B cell (primary cell): ENCODE measurements at regions of chr1 and their contacts with region 1.

Region 1: GRCh38 chr1:222814536-222815439 is at the start of gene DISP1:
- DNase-seq: peak; percentile 80
- ATAC-seq: peak; percentile 86
- H3K4me3 ChIP-seq: peak within 1 kb of the TSS; percentile 84 to 99 (median 94)
- H3K4me3 Mint-ChIP-seq: peak within 1 kb of the TSS; percentile 94
- H3K27ac ChIP-seq: peak within 1 kb of the TSS; percentile 81 to 90
- H3K27ac Mint-ChIP-seq: peak within 1 kb of the TSS; percentile 95
- H3K4me1 ChIP-seq: peaks cover 17 to 23% of the 10 kb centered on the region in 2 donors
- H3K4me1 Mint-ChIP-seq: peaks cover 39% of the 10 kb centered on the region
- H3K27me3 ChIP-seq: no peaks in the 10 kb centered on the region
- H3K27me3 Mint-ChIP-seq: no peaks in the 10 kb centered on the region
- CTCF ChIP-seq: no peak
- total RNA-seq, gene DISP1: 12.0 and 12.6 TPM in 2 replicates

Region 2: DNA sequence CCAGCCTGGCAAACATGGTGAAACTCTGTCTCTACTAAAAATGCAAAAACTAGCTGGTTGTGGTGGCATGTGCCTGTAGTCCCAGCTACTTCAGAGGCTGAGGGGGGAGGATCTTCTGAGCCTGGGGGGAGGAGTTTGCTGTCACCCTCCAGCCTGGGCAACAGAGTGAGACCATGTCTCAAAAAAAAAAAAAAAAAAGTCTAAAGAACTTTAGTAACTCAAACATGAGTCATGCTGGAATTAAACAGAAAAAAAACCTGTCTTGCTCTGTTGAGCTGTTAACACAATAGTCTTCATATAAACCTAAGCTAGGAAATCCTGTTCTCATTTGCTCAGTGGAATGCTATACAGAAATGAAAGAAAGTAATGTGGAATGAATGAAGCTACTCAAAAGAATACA is 16.7 kb before region 1 on chr1:
- CTCF ChIA-PET with region 1: interaction called, 4 read pairs
- POLR2A ChIA-PET with region 1: no interaction called
- intact Hi-C with region 1: loop called (anchors 2 kb)
- DNase-seq: peak; percentile 61
- ATAC-seq: peak; percentile 98
- H3K4me3 ChIP-seq: no peak overlapping the region
- H3K4me3 Mint-ChIP-seq: no peak overlapping the region
- H3K27ac ChIP-seq: no peak overlapping the region
- H3K27ac Mint-ChIP-seq: peak overlapping the region; percentile 70
- H3K4me1 ChIP-seq: peaks cover 14 to 18% of the 10 kb centered on the region in 2 donors
- H3K4me1 Mint-ChIP-seq: peaks cover 13% of the 10 kb centered on the region
- H3K27me3 ChIP-seq: no peaks in the 10 kb centered on the region
- H3K27me3 Mint-ChIP-seq: no peaks in the 10 kb centered on the region
- CTCF ChIP-seq: no peak

Region 3: DNA sequence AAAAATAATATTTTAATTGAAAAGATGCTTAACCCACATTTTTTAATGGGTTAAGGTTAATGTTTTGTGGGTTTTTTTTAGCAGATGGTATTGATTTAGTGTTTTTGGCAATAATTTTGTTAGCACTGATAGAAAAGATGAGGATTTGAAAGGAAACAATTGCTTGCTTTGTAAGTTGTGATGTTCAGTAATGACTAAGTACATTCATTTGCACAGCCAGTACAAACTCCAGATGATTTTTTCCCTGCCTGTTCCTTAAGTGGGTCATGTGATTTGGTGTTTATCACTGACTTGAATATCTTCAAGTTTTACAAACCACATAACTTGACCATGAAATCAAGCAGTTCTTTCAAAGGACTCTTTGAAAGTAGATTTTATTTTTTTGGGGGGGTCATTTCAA is 15.1 kb after region 1 on chr1:
- CTCF ChIA-PET with region 1: no interaction called
- POLR2A ChIA-PET with region 1: no interaction called
- intact Hi-C with region 1: loop called (anchors 2 kb)
- DNase-seq: no peak
- ATAC-seq: no peak
- H3K4me3 ChIP-seq: no peak overlapping the region
- H3K4me3 Mint-ChIP-seq: no peak overlapping the region
- H3K27ac ChIP-seq: no peak overlapping the region
- H3K27ac Mint-ChIP-seq: no peak overlapping the region
- H3K4me1 ChIP-seq: no peaks in the 10 kb centered on the region
- H3K4me1 Mint-ChIP-seq: peaks cover 23% of the 10 kb centered on the region
- H3K27me3 ChIP-seq: no peaks in the 10 kb centered on the region
- H3K27me3 Mint-ChIP-seq: no peaks in the 10 kb centered on the region
- CTCF ChIP-seq: no peak

Region 4: GRCh38 chr1:222955964-222956363 is 141.2 kb after region 1 on chr1:
- CTCF ChIA-PET with region 1: no interaction called
- POLR2A ChIA-PET with region 1: no interaction called
- intact Hi-C with region 1: no loop called
- DNase-seq: no peak
- ATAC-seq: no peak
- H3K4me3 ChIP-seq: no peak overlapping the region
- H3K4me3 Mint-ChIP-seq: no peak overlapping the region
- H3K27ac ChIP-seq: no peak overlapping the region
- H3K27ac Mint-ChIP-seq: no peak overlapping the region
- H3K4me1 ChIP-seq: no peaks in the 10 kb centered on the region
- H3K4me1 Mint-ChIP-seq: no peaks in the 10 kb centered on the region
- H3K27me3 ChIP-seq: no peaks in the 10 kb centered on the region
- H3K27me3 Mint-ChIP-seq: no peaks in the 10 kb centered on the region
- CTCF ChIP-seq: no peak